Activated CD8-positive, alpha-beta memory T cell treated with anti-CD3 and anti-CD28 coated beads, Interleukin-2, amount 10 ng/mL, durations not matched to agents 7 days and 5 days (primary cell): ENCODE measurements at regions of chr1 and their contacts with region 1.

Region 1: GRCh38 chr1:117093870-117094621 is 27.5 kb downstream of the TRIM45 start:
- DNase-seq: peak; percentile 69
- ATAC-seq: peak; percentile 98
- H3K4me3 Mint-ChIP-seq: no peak overlapping the region
- H3K27ac Mint-ChIP-seq: peak overlapping the region; percentile 20
- H3K4me1 Mint-ChIP-seq: peaks cover 20% of the 10 kb centered on the region
- H3K27me3 Mint-ChIP-seq: no peaks in the 10 kb centered on the region

Region 2: GRCh38 chr1:116962987-116963639 is 130.9 kb before region 1 on chr1:
- CTCF ChIA-PET with region 1: no interaction called
- DNase-seq: no peak
- ATAC-seq: no peak
- H3K4me3 Mint-ChIP-seq: no peak overlapping the region
- H3K27ac Mint-ChIP-seq: no peak overlapping the region
- H3K4me1 Mint-ChIP-seq: no peaks in the 10 kb centered on the region
- H3K27me3 Mint-ChIP-seq: peaks cover 4% of the 10 kb centered on the region

Region 3: GRCh38 chr1:117001254-117001927 is 92.7 kb before region 1 on chr1 and contains the start of gene CD101:
- CTCF ChIA-PET with region 1: no interaction called
- DNase-seq: no peak
- ATAC-seq: peak; percentile 53
- H3K4me3 Mint-ChIP-seq: no peak within 1 kb of the TSS
- H3K27ac Mint-ChIP-seq: peak within 1 kb of the TSS; percentile 52
- H3K4me1 Mint-ChIP-seq: peaks cover 17% of the 10 kb centered on the region
- H3K27me3 Mint-ChIP-seq: no peaks in the 10 kb centered on the region
- total RNA-seq, gene CD101: 1.4 TPM in 1 of 2 experiments, not detected in the other

Region 4: GRCh38 chr1:117067533-117068370 is 26.3 kb before region 1 on chr1:
- CTCF ChIA-PET with region 1: interaction called, 14 read pairs
- DNase-seq: peak; percentile 58
- ATAC-seq: peak; percentile 69
- H3K4me3 Mint-ChIP-seq: no peak overlapping the region
- H3K27ac Mint-ChIP-seq: peak overlapping the region; percentile 20
- H3K4me1 Mint-ChIP-seq: peaks cover 52% of the 10 kb centered on the region
- H3K27me3 Mint-ChIP-seq: no peaks in the 10 kb centered on the region

Region 5: DNA sequence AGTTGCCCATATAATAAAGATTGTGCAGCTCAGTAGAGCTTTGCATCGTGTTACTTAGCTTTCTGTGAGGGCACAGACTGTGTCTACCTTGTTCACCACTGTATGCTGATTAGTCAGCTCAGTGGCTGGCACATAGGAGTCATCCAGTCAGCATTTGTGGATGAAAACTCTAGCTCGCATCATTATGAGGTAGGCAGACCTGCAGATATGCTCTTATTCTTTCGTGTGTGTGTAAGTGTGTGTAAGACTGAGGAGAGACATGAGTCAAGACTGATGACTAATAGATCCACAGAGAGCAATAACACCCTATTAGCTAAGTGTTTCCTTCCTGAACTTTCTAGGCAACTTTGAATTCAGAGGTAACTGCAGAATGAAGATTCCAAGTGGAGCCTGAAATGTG is 16.8 kb before region 1 on chr1:
- CTCF ChIA-PET with region 1: interaction called, 14 read pairs
- DNase-seq: peak; percentile 49
- ATAC-seq: peak; percentile 83
- H3K4me3 Mint-ChIP-seq: no peak overlapping the region
- H3K27ac Mint-ChIP-seq: no peak overlapping the region
- H3K4me1 Mint-ChIP-seq: peaks cover 25% of the 10 kb centered on the region
- H3K27me3 Mint-ChIP-seq: no peaks in the 10 kb centered on the region

Region 6: GRCh38 chr1:117110774-117111173 is 16.7 kb after region 1 on chr1:
- CTCF ChIA-PET with region 1: interaction called, 12 read pairs
- DNase-seq: no peak
- ATAC-seq: no peak
- H3K4me3 Mint-ChIP-seq: no peak overlapping the region
- H3K27ac Mint-ChIP-seq: no peak overlapping the region
- H3K4me1 Mint-ChIP-seq: peaks cover 6% of the 10 kb centered on the region
- H3K27me3 Mint-ChIP-seq: no peaks in the 10 kb centered on the region